B cell (primary cell): ENCODE measurements at regions of chr2 and their contacts with region 1.

Region 1: DNA sequence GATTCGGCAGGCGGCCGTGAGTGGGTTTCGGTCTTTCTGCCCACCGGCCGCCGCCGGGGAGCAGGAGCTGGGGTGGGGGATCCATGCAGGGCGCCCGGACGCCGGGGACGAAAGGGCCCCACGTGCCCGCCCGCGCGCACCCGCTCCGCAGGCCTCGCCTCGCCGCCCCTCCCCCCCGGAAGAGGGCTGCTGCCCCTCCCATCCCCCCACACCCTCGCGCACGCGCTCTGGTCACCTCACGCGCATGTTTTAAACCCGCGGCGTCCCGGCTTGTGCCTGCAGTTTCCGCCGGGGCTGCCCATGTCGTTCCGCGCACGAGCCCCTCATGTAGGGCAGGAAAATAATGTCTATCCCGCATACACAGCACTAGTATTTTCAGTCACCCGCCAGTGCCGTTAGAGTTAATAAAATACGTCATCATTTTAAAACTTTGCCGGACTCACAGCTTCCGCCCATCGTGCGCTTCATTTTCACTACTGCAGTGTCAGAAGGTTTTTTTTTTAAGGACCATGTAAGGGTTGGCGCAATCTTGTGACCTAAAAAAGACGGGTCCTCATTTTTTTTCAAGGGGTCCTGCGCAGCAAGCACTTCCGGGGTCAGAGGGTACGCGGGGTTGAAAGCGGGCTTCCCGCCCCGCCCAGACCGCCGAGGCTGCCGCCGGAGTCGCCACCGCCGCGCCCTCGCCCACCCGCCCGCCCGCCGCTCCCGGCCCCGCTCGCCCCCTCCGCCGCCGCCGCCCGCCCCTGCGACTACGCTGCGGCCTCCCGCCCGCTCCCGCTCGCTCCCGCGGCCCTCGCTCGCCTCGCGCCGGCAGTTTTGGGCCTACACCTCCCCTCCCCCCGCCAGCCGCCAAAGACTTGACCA is at the start of gene PCBP1:
- DNase-seq: peak; percentile 97
- ATAC-seq: peak; percentile 60
- H3K4me3 ChIP-seq: peak within 1 kb of the TSS; percentile 66 to 99 (median 98)
- H3K4me3 Mint-ChIP-seq: peak within 1 kb of the TSS; percentile 94
- H3K27ac ChIP-seq: peak within 1 kb of the TSS; percentile 97 to 100
- H3K27ac Mint-ChIP-seq: peak within 1 kb of the TSS; percentile 100
- H3K4me1 ChIP-seq: peaks cover 63 to 73% of the 10 kb centered on the region in 2 donors
- H3K4me1 Mint-ChIP-seq: peaks cover 74% of the 10 kb centered on the region
- H3K27me3 ChIP-seq: no peaks in the 10 kb centered on the region
- H3K27me3 Mint-ChIP-seq: no peaks in the 10 kb centered on the region
- CTCF ChIP-seq: no peak
- total RNA-seq, gene PCBP1: 304 and 327 TPM in 2 replicates

Region 2: GRCh38 chr2:69829256-69830046 is 257.6 kb before region 1 on chr2 and contains the start of gene GMCL1:
- CTCF ChIA-PET with region 1: no interaction called
- POLR2A ChIA-PET with region 1: no interaction called
- intact Hi-C with region 1: loop called (anchors 1 kb)
- DNase-seq: peak; percentile 99
- ATAC-seq: peak; percentile 96
- H3K4me3 ChIP-seq: peak within 1 kb of the TSS; percentile 46 to 97 (median 72)
- H3K4me3 Mint-ChIP-seq: peak within 1 kb of the TSS; percentile 99
- H3K27ac ChIP-seq: peak within 1 kb of the TSS; percentile 94 to 98
- H3K27ac Mint-ChIP-seq: peak within 1 kb of the TSS; percentile 99
- H3K4me1 ChIP-seq: peaks cover 24 to 26% of the 10 kb centered on the region in 2 donors
- H3K4me1 Mint-ChIP-seq: peaks cover 38% of the 10 kb centered on the region
- H3K27me3 ChIP-seq: no peaks in the 10 kb centered on the region
- H3K27me3 Mint-ChIP-seq: no peaks in the 10 kb centered on the region
- CTCF ChIP-seq: no peak
- total RNA-seq, gene GMCL1: 22.0 and 26.3 TPM in 2 replicates

Region 3: DNA sequence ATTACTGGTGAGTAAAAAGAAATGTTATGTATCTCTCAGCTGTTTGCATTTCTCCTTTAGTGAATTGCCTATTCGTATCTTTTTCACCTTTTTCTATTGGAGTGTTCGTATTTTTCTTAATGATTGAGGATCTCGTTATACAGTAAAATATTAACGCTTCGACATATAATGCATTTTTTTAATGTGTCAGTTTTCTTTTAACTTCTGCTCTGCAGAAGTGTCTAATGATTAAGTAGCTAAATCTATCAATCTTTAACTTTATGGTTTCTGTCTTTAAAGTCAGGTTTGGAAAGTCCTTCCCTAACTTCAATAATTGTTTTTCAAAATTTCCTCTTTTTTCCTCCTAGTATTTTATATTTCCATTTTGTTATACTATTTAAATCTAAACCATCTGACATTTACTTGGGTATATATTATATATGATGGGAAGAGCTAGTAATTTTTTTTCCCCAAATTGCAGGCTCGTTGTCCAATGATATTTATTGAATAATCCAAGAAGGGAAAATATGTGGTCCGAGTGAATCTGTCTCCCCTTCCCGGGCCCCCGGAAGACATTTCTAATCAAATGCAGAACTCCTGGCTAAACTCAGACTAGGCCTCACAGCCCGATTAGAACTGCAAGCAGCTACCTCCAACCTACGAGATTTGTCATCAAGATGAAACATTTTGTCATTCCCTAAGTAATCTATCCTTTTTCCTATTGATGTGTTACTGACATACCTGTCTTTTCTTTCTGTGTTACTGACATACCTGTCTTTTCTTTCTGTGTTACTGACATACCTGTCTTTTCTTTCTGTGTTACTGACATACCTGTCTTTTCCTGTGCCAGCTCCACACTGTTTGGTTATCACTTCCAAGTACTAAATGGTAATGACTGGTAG is 17.4 kb after region 1 on chr2:
- CTCF ChIA-PET with region 1: interaction called, 22 read pairs
- POLR2A ChIA-PET with region 1: interaction called, 55 read pairs
- intact Hi-C with region 1: loop called (anchors 2 kb)
- DNase-seq: peak; percentile 68
- ATAC-seq: no peak
- H3K4me3 ChIP-seq: peak overlapping the region in 3 of 5 experiments; percentile 21 to 43 (median 34)
- H3K4me3 Mint-ChIP-seq: peak overlapping the region; percentile 83
- H3K27ac ChIP-seq: peak overlapping the region; percentile 73 to 79
- H3K27ac Mint-ChIP-seq: peak overlapping the region; percentile 94
- H3K4me1 ChIP-seq: peaks cover 38 to 50% of the 10 kb centered on the region in 2 donors
- H3K4me1 Mint-ChIP-seq: peaks cover 49% of the 10 kb centered on the region
- H3K27me3 ChIP-seq: no peaks in the 10 kb centered on the region
- H3K27me3 Mint-ChIP-seq: no peaks in the 10 kb centered on the region
- CTCF ChIP-seq: no peak

Region 4: DNA sequence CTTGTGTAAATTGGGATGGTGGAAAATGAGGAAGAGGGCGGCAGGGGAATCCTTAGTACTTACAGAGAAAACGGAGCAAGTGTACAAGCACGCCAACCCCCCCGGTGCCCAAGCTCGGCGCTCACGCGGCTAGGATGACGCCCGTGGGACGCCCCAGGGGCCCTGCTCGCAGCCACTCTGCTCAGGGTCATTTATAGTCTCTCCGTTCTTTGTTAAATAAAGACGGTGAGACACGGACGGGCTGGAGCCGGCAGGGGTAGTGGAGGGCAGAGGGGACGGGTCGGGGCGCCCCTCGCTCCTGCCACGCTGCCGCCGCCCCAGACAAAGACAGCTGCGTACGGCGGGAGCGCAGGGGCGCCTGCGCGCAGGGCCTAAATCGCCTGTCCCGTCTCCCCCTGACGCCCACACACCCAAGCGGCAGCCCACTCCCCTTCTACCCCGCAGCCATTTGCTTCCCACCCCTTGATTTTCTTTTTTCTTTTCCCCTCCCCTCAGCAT is 38.0 kb after region 1 on chr2:
- CTCF ChIA-PET with region 1: interaction called, 59 read pairs
- POLR2A ChIA-PET with region 1: interaction called, 170 read pairs
- intact Hi-C with region 1: loop called (anchors 1 kb)
- DNase-seq: peak; percentile 95
- ATAC-seq: peak; percentile 66
- H3K4me3 ChIP-seq: peak overlapping the region; percentile 32 to 99 (median 71)
- H3K4me3 Mint-ChIP-seq: peak overlapping the region; percentile 95
- H3K27ac ChIP-seq: peak overlapping the region; percentile 100
- H3K27ac Mint-ChIP-seq: peak overlapping the region; percentile 100
- H3K4me1 ChIP-seq: peaks cover 63 to 71% of the 10 kb centered on the region in 2 donors
- H3K4me1 Mint-ChIP-seq: peaks cover 65% of the 10 kb centered on the region
- H3K27me3 ChIP-seq: no peaks in the 10 kb centered on the region
- H3K27me3 Mint-ChIP-seq: no peaks in the 10 kb centered on the region
- CTCF ChIP-seq: no peak

Region 5: GRCh38 chr2:70137519-70137918 is 50.4 kb after region 1 on chr2:
- CTCF ChIA-PET with region 1: interaction called, 98 read pairs
- POLR2A ChIA-PET with region 1: interaction called, 115 read pairs
- intact Hi-C with region 1: loop called (anchors 1 kb)
- DNase-seq: no peak
- ATAC-seq: no peak
- H3K4me3 ChIP-seq: no peak overlapping the region
- H3K4me3 Mint-ChIP-seq: peak overlapping the region; percentile 2
- H3K27ac ChIP-seq: no peak overlapping the region
- H3K27ac Mint-ChIP-seq: peak overlapping the region; percentile 54
- H3K4me1 ChIP-seq: peaks cover 50 to 61% of the 10 kb centered on the region in 2 donors
- H3K4me1 Mint-ChIP-seq: peaks cover 63% of the 10 kb centered on the region
- H3K27me3 ChIP-seq: no peaks in the 10 kb centered on the region
- H3K27me3 Mint-ChIP-seq: no peaks in the 10 kb centered on the region
- CTCF ChIP-seq: no peak

Region 6: GRCh38 chr2:70248181-70248847 is 161.2 kb after region 1 on chr2 and contains the start of gene TIA1:
- CTCF ChIA-PET with region 1: no interaction called
- POLR2A ChIA-PET with region 1: interaction called, 3 read pairs
- intact Hi-C with region 1: loop called (anchors 2 kb)
- DNase-seq: peak; percentile 99
- ATAC-seq: peak; percentile 96
- H3K4me3 ChIP-seq: peak within 1 kb of the TSS; percentile 70 to 98 (median 95)
- H3K4me3 Mint-ChIP-seq: peak within 1 kb of the TSS; percentile 98
- H3K27ac ChIP-seq: peak within 1 kb of the TSS; percentile 86 to 94
- H3K27ac Mint-ChIP-seq: peak within 1 kb of the TSS; percentile 98
- H3K4me1 ChIP-seq: peaks cover 24 to 29% of the 10 kb centered on the region in 2 donors
- H3K4me1 Mint-ChIP-seq: peaks cover 35% of the 10 kb centered on the region
- H3K27me3 ChIP-seq: no peaks in the 10 kb centered on the region
- H3K27me3 Mint-ChIP-seq: no peaks in the 10 kb centered on the region
- CTCF ChIP-seq: no peak
- total RNA-seq, gene TIA1: 214 and 243 TPM in 2 replicates